ENCODE measurements at regions of chr9 and their contacts with region 1.

Region 1: GRCh38 chr9:75001719-75002422 is 26.2 kb downstream of the CARNMT1 start:
- DNase-seq: no peak
- H3K4me3 ChIP-seq: no peak overlapping the region
- H3K27ac ChIP-seq: no peak overlapping the region
- H3K4me1 ChIP-seq: peaks cover 1% of the 10 kb centered on the region
- H3K27me3 ChIP-seq: no peaks in the 10 kb centered on the region
- CTCF ChIP-seq: peak; percentile 55 to 75 (median 69)
- EP300 ChIP-seq: no peak
- POLR2A ChIP-seq: no peak

Region 2: GRCh38 chr9:74960563-74960962 is 41.3 kb before region 1 on chr9:
- intact Hi-C with region 1: loop called in 1 of 4 experiments (anchors 5 kb)
- DNase-seq: no peak
- H3K4me3 ChIP-seq: no peak overlapping the region
- H3K27ac ChIP-seq: no peak overlapping the region
- H3K4me1 ChIP-seq: no peaks in the 10 kb centered on the region
- H3K27me3 ChIP-seq: no peaks in the 10 kb centered on the region
- CTCF ChIP-seq: no peak
- EP300 ChIP-seq: no peak
- POLR2A ChIP-seq: no peak

Measured in ovary (tissue), 10 donors.